ENCODE measurements at regions of chr6 and their contacts with region 1.

Region 1: GRCh38 chr6:36979347-36979742 is 6.7 kb downstream of the MTCH1 start:
- DNase-seq: no peak
- ATAC-seq: peak; percentile 20 to 76 (median 70)
- H3K4me3 ChIP-seq: no peak overlapping the region
- H3K27ac ChIP-seq: peak overlapping the region in 8 of 10 donors; percentile 6 to 63 (median 50)
- H3K4me1 ChIP-seq: peaks cover 33 to 100% (median 87%) of the 10 kb centered on the region in 9 donors
- H3K27me3 ChIP-seq: no peaks in the 10 kb centered on the region
- CTCF ChIP-seq: peak; percentile 18 to 74 (median 57)

Region 2: DNA sequence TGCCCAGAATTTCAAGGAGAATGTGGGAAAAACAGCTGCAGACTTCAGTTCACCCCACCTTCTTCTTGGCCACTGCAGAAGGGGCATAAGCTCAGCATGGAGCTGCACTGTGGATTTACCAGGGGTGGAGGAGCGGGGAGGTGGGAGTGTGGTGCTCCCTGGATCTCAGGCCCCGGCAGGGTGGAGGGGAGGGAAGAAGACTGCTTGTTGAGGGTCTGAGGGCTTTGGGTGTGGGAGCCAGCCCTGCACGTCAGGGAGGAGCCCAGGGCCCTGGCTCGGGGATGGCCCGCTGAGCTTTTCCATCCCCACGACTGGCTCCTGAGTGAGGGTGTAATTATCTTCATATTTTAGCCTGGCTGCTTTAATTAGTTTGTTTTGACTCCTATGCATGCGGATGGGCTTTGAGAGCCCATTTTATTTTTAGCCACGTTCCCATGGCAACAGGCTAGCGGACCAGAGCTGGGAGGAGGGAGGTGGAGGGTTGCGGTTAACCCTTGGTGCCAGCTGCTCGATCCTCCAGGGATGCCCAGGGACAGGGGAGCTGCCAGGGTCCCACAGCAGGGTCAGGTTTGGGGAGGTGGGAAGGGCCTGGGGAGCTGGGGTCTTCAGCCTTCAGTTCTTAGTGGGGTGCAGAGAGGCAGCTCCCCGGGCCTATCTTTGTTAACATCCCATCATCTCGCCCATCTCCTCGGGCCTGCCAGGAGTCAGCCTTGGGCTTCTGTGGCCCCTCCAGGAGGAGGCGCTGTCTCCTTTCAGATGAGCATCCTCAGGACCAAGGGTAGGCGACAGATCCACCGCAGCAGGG is 213.5 kb before region 1 on chr6:
- intact Hi-C with region 1: loop called in 3 of 10 experiments (anchors 5 to 10 kb)
- DNase-seq: peak; percentile 80 to 83
- ATAC-seq: peak; percentile 53 to 86 (median 80)
- H3K4me3 ChIP-seq: no peak overlapping the region
- H3K27ac ChIP-seq: no peak overlapping the region
- H3K4me1 ChIP-seq: peaks cover 12 to 45% (median 39%) of the 10 kb centered on the region in 9 donors
- H3K27me3 ChIP-seq: no peaks in the 10 kb centered on the region
- CTCF ChIP-seq: peak; percentile 67 to 96 (median 92)

Region 3: DNA sequence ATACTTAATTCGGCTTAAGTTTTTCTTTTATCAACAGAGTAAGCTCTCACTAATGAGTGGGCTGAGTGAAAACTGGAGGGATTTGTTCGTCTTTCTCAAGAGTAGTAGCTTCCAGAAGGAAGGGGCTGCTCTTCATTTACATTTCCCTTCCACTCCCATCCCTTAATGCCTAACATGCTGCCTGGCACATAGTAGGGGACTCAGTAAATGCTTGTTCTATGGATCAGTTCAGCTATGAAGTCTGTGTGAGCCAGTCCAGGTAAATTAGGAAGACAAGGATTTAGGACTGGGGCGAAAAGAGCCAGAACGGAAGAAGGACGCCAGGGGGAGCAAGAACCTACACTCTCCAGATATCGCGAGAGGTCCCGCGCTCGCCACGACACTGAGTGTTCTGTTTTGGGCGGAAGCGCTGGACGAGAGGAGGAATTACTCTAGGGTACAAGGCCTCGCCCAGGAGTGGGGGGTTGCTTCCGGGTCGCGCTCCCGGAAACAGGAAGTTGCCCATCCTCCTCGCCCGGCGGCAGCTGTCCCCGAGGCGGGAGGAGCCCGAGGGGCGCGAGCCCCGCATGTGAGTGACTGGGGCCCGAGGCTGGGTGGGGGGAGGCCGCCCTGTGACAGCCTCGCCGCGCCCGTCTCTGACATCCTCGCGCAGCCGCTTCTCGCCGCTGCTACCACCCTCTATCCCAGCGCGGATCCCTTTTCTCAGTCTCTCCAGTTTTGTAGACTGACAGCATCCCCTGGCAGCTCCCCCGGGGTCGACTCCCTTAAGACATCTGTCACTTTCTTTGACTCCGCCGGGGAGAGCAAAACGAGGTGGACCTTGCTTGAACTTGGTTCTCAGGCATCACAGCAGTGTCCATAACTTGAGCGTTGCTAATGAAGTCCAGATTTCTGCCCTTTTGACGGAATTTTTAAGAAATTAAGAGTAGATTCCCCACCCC is 93.6 kb before region 1 on chr6 and contains the start of gene C6orf89:
- intact Hi-C with region 1: loop called in 9 of 10 experiments (anchors 2 to 10 kb)
- DNase-seq: peak; percentile 96 to 98
- ATAC-seq: peak; percentile 99 to 100 (median 100)
- H3K4me3 ChIP-seq: peak within 1 kb of the TSS; percentile 18 to 95 (median 74)
- H3K27ac ChIP-seq: peak within 1 kb of the TSS; percentile 76 to 95 (median 92)
- H3K4me1 ChIP-seq: peaks cover 8 to 46% (median 30%) of the 10 kb centered on the region in 9 donors
- H3K27me3 ChIP-seq: no peaks in the 10 kb centered on the region
- CTCF ChIP-seq: peak; percentile 78 to 96 (median 85)
- total RNA-seq, gene C6orf89: 64.6 to 104 (median 74.7) TPM

Region 4: DNA sequence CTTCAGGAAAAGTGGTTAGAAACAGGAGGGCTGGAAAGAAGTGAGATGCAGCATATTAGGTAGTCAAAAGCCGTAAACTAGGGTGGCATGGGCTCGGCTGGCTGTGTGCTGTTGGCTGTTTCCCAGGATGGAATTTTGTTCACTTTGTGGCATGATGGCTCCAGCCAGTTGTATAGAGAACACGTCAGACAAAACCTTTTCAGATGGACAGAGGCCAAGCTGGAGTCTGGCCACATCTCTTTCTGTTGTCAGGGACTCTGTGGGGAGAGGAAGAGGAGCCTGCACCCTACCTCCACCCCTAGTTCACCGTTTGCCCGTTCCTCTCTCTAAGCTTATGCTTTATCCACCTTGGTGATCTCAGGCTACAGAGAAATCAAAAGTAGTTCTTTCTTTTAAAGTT is 71.6 kb before region 1 on chr6:
- intact Hi-C with region 1: loop called in 2 of 10 experiments (anchors 5 kb)
- DNase-seq: peak; percentile 56 to 72
- ATAC-seq: peak; percentile 57 to 95 (median 92)
- H3K4me3 ChIP-seq: no peak overlapping the region
- H3K27ac ChIP-seq: peak overlapping the region; percentile 41 to 77 (median 60)
- H3K4me1 ChIP-seq: peaks cover 8 to 64% (median 37%) of the 10 kb centered on the region in 9 donors
- H3K27me3 ChIP-seq: no peaks in the 10 kb centered on the region
- CTCF ChIP-seq: no peak

Region 5: GRCh38 chr6:36917541-36918193 is 61.7 kb before region 1 on chr6:
- intact Hi-C with region 1: loop called in 1 of 10 experiments (anchors 5 kb)
- DNase-seq: no peak
- ATAC-seq: peak in 7 of 8 donors; percentile 27 to 63 (median 49)
- H3K4me3 ChIP-seq: no peak overlapping the region
- H3K27ac ChIP-seq: peak overlapping the region; percentile 54 to 91 (median 75)
- H3K4me1 ChIP-seq: peaks cover 8 to 45% (median 29%) of the 10 kb centered on the region in 9 donors
- H3K27me3 ChIP-seq: no peaks in the 10 kb centered on the region
- CTCF ChIP-seq: no peak

Region 6: DNA sequence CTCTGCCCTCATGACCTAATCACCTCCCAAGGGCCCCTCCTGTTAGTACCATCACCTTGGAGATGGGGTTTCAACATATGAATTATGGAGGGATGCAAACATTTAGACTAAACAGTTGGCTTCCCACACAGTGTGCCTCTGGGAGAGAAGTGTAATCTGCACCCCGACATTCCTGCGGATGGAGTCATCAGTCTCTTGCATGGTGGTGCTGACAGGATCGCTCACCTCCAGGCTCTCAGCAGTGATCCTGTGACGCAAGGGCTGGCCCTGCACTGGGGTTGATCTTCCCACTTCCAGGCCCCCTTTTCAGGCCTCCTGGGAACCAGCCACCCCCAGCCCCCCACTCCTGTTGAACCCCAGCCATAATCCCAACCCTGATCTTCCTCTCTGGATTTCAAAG is 40.8 kb before region 1 on chr6:
- intact Hi-C with region 1: no loop called
- DNase-seq: no peak
- ATAC-seq: peak in 4 of 8 donors; percentile 27 to 71 (median 54)
- H3K4me3 ChIP-seq: no peak overlapping the region
- H3K27ac ChIP-seq: no peak overlapping the region
- H3K4me1 ChIP-seq: no peaks in the 10 kb centered on the region
- H3K27me3 ChIP-seq: no peaks in the 10 kb centered on the region
- CTCF ChIP-seq: no peak

Region 7: DNA sequence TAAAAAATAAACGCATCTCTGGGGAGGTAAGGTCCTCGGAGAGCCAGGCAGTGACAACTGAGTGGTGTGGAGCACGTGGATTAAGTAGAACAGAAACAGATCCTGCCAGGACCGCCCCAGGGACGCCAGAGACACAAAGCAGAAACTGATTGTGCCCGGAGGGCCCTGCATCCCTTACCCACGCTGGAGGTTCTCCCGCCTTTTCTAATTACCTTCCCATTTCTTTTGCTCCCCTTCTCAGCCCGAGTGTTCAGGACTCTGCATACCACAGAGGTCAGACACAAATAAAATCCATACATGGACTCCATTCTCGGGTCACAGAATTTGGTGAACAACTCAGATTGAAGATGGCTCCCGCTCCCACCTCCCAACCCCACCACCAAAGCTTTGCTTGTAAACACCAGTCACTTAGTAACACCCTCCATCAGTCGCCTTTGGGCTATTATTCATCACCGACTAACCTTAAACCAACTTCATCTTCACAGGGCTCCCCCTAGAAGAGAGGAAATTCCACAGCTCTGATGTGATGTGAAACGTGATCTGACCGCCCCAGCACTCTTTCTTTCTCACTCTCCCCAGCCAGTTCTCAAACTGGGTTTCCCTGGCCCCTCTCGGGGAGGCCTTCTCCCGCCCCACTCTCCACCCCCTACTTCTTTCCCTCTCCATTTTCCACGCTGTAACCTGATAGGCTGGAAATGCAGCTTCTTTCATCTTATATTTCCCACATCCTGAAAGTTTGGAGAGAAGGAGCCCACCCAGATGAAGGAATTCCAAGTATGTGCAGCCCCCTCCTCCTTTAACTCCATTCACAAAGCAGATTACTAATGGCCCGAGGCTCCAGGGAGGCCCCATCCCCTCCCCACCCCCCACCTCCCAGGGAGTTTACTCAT is 158.1 kb after region 1 on chr6:
- intact Hi-C with region 1: no loop called
- DNase-seq: no peak
- ATAC-seq: peak; percentile 28 to 75 (median 46)
- H3K4me3 ChIP-seq: no peak overlapping the region
- H3K27ac ChIP-seq: peak overlapping the region in 2 of 10 donors; percentile 7 to 77
- H3K4me1 ChIP-seq: peaks cover 3 to 44% (median 13%) of the 10 kb centered on the region in 9 donors
- H3K27me3 ChIP-seq: no peaks in the 10 kb centered on the region
- CTCF ChIP-seq: no peak